Activated CD8-positive, alpha-beta T cell treated with anti-CD3 and anti-CD28 coated beads, Interleukin-2, amount 10 ng/mL, durations not matched to agents 7 days and 5 days (primary cell): ENCODE measurements at regions of chr12 and their contacts with region 1.

Region 1: GRCh38 chr12:6632026-6632983 is 3.5 kb downstream of the LPAR5 start:
- DNase-seq: peak; percentile 81
- ATAC-seq: peak; percentile 66
- H3K4me3 Mint-ChIP-seq: peak overlapping the region; percentile 76
- H3K27ac Mint-ChIP-seq: peak overlapping the region; percentile 96
- H3K4me1 Mint-ChIP-seq: peaks cover 70% of the 10 kb centered on the region
- H3K27me3 Mint-ChIP-seq: no peaks in the 10 kb centered on the region

Region 2: GRCh38 chr12:6613776-6614512 is 18.4 kb before region 1 on chr12:
- CTCF ChIA-PET with region 1: interaction called, 24 read pairs
- POLR2A ChIA-PET with region 1: interaction called, 13 read pairs
- DNase-seq: peak; percentile 76
- ATAC-seq: peak; percentile 40
- H3K4me3 Mint-ChIP-seq: no peak overlapping the region
- H3K27ac Mint-ChIP-seq: peak overlapping the region; percentile 79
- H3K4me1 Mint-ChIP-seq: peaks cover 62% of the 10 kb centered on the region
- H3K27me3 Mint-ChIP-seq: no peaks in the 10 kb centered on the region

Region 3: GRCh38 chr12:6620137-6620884 is 12.0 kb before region 1 on chr12:
- CTCF ChIA-PET with region 1: interaction called, 24 read pairs
- POLR2A ChIA-PET with region 1: interaction called, 12 read pairs
- DNase-seq: peak; percentile 59
- ATAC-seq: peak; percentile 74
- H3K4me3 Mint-ChIP-seq: peak overlapping the region; percentile 64
- H3K27ac Mint-ChIP-seq: peak overlapping the region; percentile 64
- H3K4me1 Mint-ChIP-seq: peaks cover 27% of the 10 kb centered on the region
- H3K27me3 Mint-ChIP-seq: no peaks in the 10 kb centered on the region

Region 4: DNA sequence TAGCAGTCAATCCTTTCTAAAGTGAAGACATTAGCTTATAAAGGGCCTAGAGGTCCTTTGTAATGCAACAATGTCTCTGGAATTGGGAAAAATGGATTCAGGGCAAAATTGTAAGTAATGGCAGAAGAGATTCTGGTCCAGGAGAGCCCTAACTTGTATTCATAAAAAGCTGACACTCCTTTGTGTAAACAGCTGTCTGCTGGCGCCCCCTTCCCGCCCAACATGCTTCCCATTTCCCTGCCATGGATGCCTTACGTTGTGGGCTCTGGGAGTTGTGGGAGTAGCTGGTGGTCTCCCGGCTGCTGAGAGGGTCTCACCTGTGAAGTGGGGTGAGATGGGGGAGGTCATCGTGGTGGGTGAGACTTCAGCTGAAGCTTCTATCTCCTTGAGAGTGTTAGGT is 12.6 kb after region 1 on chr12:
- CTCF ChIA-PET with region 1: interaction called, 11 read pairs
- POLR2A ChIA-PET with region 1: interaction called, 7 read pairs
- DNase-seq: no peak
- ATAC-seq: no peak
- H3K4me3 Mint-ChIP-seq: no peak overlapping the region
- H3K27ac Mint-ChIP-seq: no peak overlapping the region
- H3K4me1 Mint-ChIP-seq: peaks cover 18% of the 10 kb centered on the region
- H3K27me3 Mint-ChIP-seq: peaks cover 14% of the 10 kb centered on the region

Region 5: DNA sequence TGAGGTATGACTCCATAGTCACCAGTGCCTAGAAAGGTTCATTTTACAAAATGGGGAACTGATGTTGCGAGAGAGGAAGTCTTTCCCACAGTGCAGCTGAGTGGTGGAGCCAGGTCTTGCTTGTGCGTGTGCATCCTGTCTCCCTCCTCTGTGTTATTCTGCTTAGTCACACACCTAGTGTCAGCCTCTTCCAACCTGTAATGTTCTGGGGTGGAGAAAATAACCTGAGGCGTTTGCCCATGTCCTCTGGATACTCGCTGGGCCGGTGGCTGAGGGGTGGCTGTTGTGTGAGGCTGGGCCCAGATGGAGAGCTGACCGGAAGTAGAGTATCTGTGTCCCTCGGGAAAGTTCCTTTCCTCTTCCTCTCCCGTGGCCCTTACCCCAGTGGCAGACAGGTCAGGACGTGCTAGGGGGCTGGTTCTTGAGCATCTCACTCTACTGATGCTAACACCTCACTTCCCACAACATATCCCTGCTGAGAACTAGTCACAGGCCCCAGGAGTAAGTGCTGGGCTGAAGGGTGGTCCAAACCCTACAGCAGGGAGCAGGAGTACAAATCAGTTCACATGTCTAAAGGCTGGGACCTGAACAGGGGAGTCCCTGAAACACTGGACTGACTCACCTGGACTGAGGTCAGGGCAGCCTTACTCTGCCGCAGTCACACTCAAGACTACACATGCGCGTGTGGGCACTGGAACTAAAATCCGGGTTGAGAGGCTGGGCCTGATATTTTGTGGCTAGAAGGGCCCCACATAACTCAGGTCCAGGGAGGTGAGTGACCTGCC is 113.6 kb after region 1 on chr12:
- CTCF ChIA-PET with region 1: no interaction called
- POLR2A ChIA-PET with region 1: no interaction called
- DNase-seq: peak; percentile 66
- ATAC-seq: peak; percentile 86
- H3K4me3 Mint-ChIP-seq: peak overlapping the region; percentile 0
- H3K27ac Mint-ChIP-seq: peak overlapping the region; percentile 90
- H3K4me1 Mint-ChIP-seq: peaks cover 24% of the 10 kb centered on the region
- H3K27me3 Mint-ChIP-seq: no peaks in the 10 kb centered on the region